H1 (cell line): ENCODE measurements at regions of chr3 and their contacts with region 1.

Region 1: GRCh38 chr3:123328851-123329635 is 119.8 kb downstream of the ADCY5 start:
- DNase-seq: peak in 1 of 2 experiments; percentile 96
- H3K4me3 ChIP-seq: no peak overlapping the region
- H3K27ac ChIP-seq: no peak overlapping the region
- H3K4me1 ChIP-seq: peaks cover 0 to 5% (median 1%) of the 10 kb centered on the region in 4 experiments; a peak in 3 of 7 replicates
- H3K27me3 ChIP-seq: no peaks in the 10 kb centered on the region
- CTCF ChIP-seq: peak in 2 of 3 experiments; percentile 90 to 94; a peak in 3 of 4 replicates
- EP300 ChIP-seq: no peak
- POLR2A ChIP-seq: no peak
- RAD21 ChIP-seq: peak; percentile 86 to 88

Region 2: DNA sequence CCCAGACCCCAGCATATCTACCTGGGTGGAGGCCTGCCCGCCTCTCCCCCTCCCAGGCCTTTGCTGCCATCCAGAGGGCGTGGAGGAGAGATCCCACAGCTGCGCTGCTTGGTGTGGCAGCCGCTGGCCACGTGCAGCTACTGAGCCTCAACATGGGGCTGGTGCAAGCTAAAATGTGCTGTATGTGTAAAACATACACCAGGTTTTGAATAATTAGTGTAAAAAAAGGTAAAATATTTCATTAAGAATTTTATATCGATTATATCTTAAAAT is 31.5 kb before region 1 on chr3:
- CTCF ChIA-PET with region 1: interaction called, 245 read pairs
- POLR2A ChIA-PET with region 1: interaction called, 3 read pairs
- DNase-seq: no peak
- H3K4me3 ChIP-seq: no peak overlapping the region
- H3K27ac ChIP-seq: no peak overlapping the region
- H3K4me1 ChIP-seq: peaks cover 0 to 2% (median 0%) of the 10 kb centered on the region in 4 experiments; a peak in 1 of 7 replicates
- H3K27me3 ChIP-seq: no peaks in the 10 kb centered on the region
- CTCF ChIP-seq: peak in 2 of 3 experiments; percentile 31 to 51; a peak in 3 of 4 replicates
- EP300 ChIP-seq: no peak
- POLR2A ChIP-seq: no peak
- RAD21 ChIP-seq: peak; percentile 66 to 76

Region 3: DNA sequence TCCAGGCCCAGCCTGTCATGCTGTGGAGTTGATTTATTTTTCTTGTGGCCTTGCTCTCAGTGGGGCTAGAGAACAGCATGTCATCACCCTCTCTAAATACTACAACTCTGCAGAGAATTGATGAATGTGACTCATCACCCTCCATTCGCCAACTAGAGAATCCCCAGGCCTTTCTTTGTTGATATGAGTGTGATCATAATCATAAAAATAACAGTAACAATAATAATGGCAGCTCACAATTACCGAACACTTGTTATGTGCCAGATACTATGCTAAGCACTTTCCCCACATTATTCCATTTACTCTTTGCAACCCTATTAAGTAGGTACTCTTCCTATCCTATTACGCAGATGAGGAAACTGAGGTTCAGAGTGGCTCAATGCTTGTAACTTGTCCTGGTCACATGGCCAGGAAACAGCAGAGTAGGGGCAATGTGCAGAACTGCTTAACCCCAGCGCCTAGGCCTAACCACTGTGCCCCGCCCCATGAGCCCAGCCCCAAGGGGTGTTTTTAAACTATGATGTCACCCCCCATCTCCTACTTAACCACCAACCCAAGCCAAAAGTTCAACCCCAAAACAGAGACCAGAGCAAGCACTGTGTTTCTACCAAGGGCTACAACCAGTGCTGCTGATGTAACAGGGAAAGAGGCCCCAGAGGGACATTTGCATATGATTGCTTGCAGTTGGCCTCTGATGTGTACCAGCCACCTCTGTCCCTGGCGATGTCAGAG is 15.3 kb after region 1 on chr3:
- CTCF ChIA-PET with region 1: interaction called, 43 read pairs
- POLR2A ChIA-PET with region 1: no interaction called
- DNase-seq: no peak
- H3K4me3 ChIP-seq: no peak overlapping the region
- H3K27ac ChIP-seq: no peak overlapping the region
- H3K4me1 ChIP-seq: peaks cover 5 to 17% (median 9%) of the 10 kb centered on the region in 4 experiments; a peak in 6 of 7 replicates
- H3K27me3 ChIP-seq: no peaks in the 10 kb centered on the region
- CTCF ChIP-seq: no peak
- EP300 ChIP-seq: no peak
- POLR2A ChIP-seq: no peak
- RAD21 ChIP-seq: no peak

Region 4: DNA sequence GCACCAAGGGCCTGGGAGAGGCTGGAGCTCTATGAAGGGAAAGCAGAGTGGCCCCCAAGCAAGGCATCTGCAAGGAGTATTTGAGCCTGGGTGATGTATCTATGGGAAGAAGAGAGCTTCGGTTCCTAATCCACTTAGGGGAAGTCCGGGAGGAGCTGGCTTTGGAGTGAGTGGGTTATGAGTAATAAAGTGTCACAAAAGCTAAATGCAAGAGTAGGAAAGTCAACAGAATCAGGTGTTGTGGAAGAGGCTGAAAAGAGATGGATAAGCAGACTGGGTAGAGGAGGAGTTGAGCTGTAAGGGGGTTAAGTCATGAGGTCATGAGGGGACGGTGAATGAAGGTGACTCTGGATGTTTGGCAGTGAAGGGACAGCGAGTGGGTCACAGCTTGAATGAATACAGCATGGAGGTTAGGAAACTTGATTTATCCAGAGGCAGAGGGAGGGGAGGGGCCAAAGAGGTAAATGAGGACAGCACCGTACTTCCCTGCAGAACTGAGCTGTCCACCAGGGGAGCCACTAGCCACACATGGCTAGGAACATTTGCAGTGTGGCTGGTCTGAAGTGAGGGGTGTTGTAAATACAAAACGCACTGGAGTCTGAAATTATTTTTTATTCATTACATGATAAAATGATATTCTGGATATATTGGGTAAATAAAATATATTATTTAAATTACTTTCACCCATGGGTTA is 36.6 kb after region 1 on chr3:
- CTCF ChIA-PET with region 1: interaction called, 29 read pairs
- POLR2A ChIA-PET with region 1: no interaction called
- DNase-seq: peak in 1 of 2 experiments; percentile 25
- H3K4me3 ChIP-seq: no peak overlapping the region
- H3K27ac ChIP-seq: no peak overlapping the region
- H3K4me1 ChIP-seq: peaks cover 0 to 2% (median 0%) of the 10 kb centered on the region in 4 experiments; a peak in 1 of 7 replicates
- H3K27me3 ChIP-seq: no peaks in the 10 kb centered on the region
- CTCF ChIP-seq: peak; percentile 74 to 96 (median 90)
- EP300 ChIP-seq: no peak
- POLR2A ChIP-seq: no peak
- RAD21 ChIP-seq: peak; percentile 65 to 72

Region 5: GRCh38 chr3:123480428-123480827 is 151.4 kb after region 1 on chr3:
- CTCF ChIA-PET with region 1: interaction called, 12 read pairs
- POLR2A ChIA-PET with region 1: no interaction called
- DNase-seq: no peak
- H3K4me3 ChIP-seq: no peak overlapping the region
- H3K27ac ChIP-seq: no peak overlapping the region
- H3K4me1 ChIP-seq: no peaks in the 10 kb centered on the region
- H3K27me3 ChIP-seq: no peaks in the 10 kb centered on the region; a peak in 1 of 7 replicates
- CTCF ChIP-seq: no peak
- EP300 ChIP-seq: no peak
- POLR2A ChIP-seq: no peak
- RAD21 ChIP-seq: no peak